ENCODE measurements at regions of chr12 and their contacts with region 1.

Region 1: GRCh38 chr12:133037207-133038005 is at the start of gene ZNF84:
- DNase-seq: peak; percentile 87 to 94
- H3K4me3 ChIP-seq: peak within 1 kb of the TSS; percentile 73 to 85 (median 78)
- H3K27ac ChIP-seq: peak within 1 kb of the TSS; percentile 96
- H3K4me1 ChIP-seq: no peaks in the 10 kb centered on the region
- H3K27me3 ChIP-seq: no peaks in the 10 kb centered on the region
- CTCF ChIP-seq: no peak
- EP300 ChIP-seq: no peak
- POLR2A ChIP-seq: peak; percentile 66 to 88
- RAD21 ChIP-seq: no peak
- total RNA-seq, gene ZNF84: 33.5 and 34.0 TPM in 2 replicates

Region 2: GRCh38 chr12:132986001-132986912 is 51.1 kb before region 1 on chr12 and contains the start of gene ZNF26:
- CTCF ChIA-PET with region 1: no interaction called
- POLR2A ChIA-PET with region 1: interaction called, 21 read pairs
- DNase-seq: peak; percentile 83 to 87
- H3K4me3 ChIP-seq: peak within 1 kb of the TSS; percentile 90 to 98 (median 95)
- H3K27ac ChIP-seq: peak within 1 kb of the TSS; percentile 38; the same call in 1 of the 2 replicates
- H3K4me1 ChIP-seq: no peaks in the 10 kb centered on the region; a peak in 1 of 7 replicates
- H3K27me3 ChIP-seq: no peaks in the 10 kb centered on the region
- CTCF ChIP-seq: no peak
- EP300 ChIP-seq: no peak
- POLR2A ChIP-seq: peak in 1 of 2 experiments; percentile 91; a peak in 2 of 3 replicates
- RAD21 ChIP-seq: no peak
- total RNA-seq, gene ZNF26: 7.6 and 8.4 TPM in 2 replicates

Region 3: GRCh38 chr12:133026996-133027395 is 10.4 kb before region 1 on chr12:
- CTCF ChIA-PET with region 1: no interaction called
- POLR2A ChIA-PET with region 1: interaction called, 11 read pairs
- DNase-seq: no peak
- H3K4me3 ChIP-seq: no peak overlapping the region
- H3K27ac ChIP-seq: no peak overlapping the region
- H3K4me1 ChIP-seq: no peaks in the 10 kb centered on the region
- H3K27me3 ChIP-seq: peaks cover 0 to 2% (median 0%) of the 10 kb centered on the region in 4 experiments; a peak in 1 of 7 replicates
- CTCF ChIP-seq: no peak
- EP300 ChIP-seq: no peak
- POLR2A ChIP-seq: no peak
- RAD21 ChIP-seq: no peak

Region 4: GRCh38 chr12:133058203-133059125 is 21.1 kb after region 1 on chr12:
- CTCF ChIA-PET with region 1: no interaction called
- POLR2A ChIA-PET with region 1: interaction called, 26 read pairs
- DNase-seq: no peak
- H3K4me3 ChIP-seq: peak overlapping the region in 1 of 4 experiments; percentile 42; a peak in 1 of 8 replicates
- H3K27ac ChIP-seq: no peak overlapping the region
- H3K4me1 ChIP-seq: no peaks in the 10 kb centered on the region
- H3K27me3 ChIP-seq: no peaks in the 10 kb centered on the region
- CTCF ChIP-seq: no peak
- EP300 ChIP-seq: no peak
- POLR2A ChIP-seq: peak in 1 of 2 experiments; percentile 6; a peak in 1 of 3 replicates
- RAD21 ChIP-seq: no peak

Region 5: DNA sequence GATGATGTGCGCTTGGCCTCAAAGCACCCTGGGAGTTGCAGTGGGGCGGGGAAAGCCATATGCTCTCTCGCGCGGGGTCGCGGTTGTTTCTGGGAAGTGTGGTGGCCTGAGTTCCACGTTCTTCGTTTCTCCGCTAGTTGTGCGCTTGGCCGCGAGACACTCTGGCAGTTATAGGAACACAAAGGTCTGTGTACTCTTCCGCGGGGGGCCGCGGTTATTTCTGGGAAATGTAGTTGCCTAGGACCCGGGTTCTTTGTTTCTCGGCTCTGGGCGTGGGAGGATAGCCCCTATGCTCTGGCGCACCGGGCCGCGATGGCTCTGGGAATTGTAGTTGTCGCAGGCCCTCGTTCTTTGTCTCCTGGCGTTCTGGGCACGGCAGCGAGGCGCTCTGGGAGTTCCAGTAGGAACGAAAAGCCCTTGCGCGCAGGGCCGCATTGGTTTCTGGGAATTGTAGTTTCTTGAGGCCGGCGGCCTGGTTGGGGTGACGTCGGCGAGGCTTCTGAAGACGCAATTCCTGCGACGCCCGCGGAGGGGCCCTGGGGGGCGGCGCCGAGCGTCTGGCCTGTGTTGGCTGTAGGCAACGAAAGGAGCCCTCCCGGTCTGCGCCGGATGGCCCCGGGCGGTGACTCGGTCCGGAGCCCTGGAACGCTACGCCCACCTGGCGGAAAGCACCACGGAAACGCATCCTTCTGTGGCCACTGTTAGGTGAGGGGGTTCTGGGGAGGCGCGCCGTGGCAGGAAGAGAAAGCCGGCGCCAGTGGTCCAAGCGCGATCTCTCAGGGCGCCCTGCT is 43.2 kb after region 1 on chr12 and contains the start of gene ZNF140:
- CTCF ChIA-PET with region 1: no interaction called
- POLR2A ChIA-PET with region 1: interaction called, 24 read pairs
- DNase-seq: peak; percentile 94
- H3K4me3 ChIP-seq: peak within 1 kb of the TSS; percentile 89 to 100 (median 94)
- H3K27ac ChIP-seq: peak within 1 kb of the TSS; percentile 97
- H3K4me1 ChIP-seq: no peaks in the 10 kb centered on the region
- H3K27me3 ChIP-seq: no peaks in the 10 kb centered on the region
- CTCF ChIP-seq: peak in 2 of 3 experiments; percentile 6 to 14; a peak in 2 of 4 replicates
- EP300 ChIP-seq: no peak
- POLR2A ChIP-seq: peak in 1 of 2 experiments; percentile 89; a peak in 2 of 3 replicates
- RAD21 ChIP-seq: peak; percentile 36 to 37; a peak in 3 of 4 replicates
- total RNA-seq, gene ZNF140: 13.8 and 14.3 TPM in 2 replicates

Region 6: GRCh38 chr12:133130038-133130807 is 92.8 kb after region 1 on chr12 and contains the starts of genes ZNF10 and ZNF891:
- CTCF ChIA-PET with region 1: no interaction called
- POLR2A ChIA-PET with region 1: interaction called, 20 read pairs
- DNase-seq: peak; percentile 88 to 98
- H3K4me3 ChIP-seq: peak within 1 kb of the TSS; percentile 69 to 98 (median 87)
- H3K27ac ChIP-seq: peak within 1 kb of the TSS; percentile 87
- H3K4me1 ChIP-seq: no peaks in the 10 kb centered on the region
- H3K27me3 ChIP-seq: no peaks in the 10 kb centered on the region
- CTCF ChIP-seq: no peak
- EP300 ChIP-seq: no peak
- POLR2A ChIP-seq: peak; percentile 92 to 95
- RAD21 ChIP-seq: no peak
- total RNA-seq, gene ZNF10: 11.9 and 13.7 TPM in 2 replicates
- total RNA-seq, gene ZNF891: 3.1 TPM in 2 replicates

Region 7: GRCh38 chr12:133235401-133236112 is 198.2 kb after region 1 on chr12 and contains the start of gene ANHX:
- CTCF ChIA-PET with region 1: no interaction called
- POLR2A ChIA-PET with region 1: no interaction called
- DNase-seq: no peak
- H3K4me3 ChIP-seq: no peak within 1 kb of the TSS
- H3K27ac ChIP-seq: no peak within 1 kb of the TSS
- H3K4me1 ChIP-seq: no peaks in the 10 kb centered on the region
- H3K27me3 ChIP-seq: no peaks in the 10 kb centered on the region
- CTCF ChIP-seq: no peak
- EP300 ChIP-seq: no peak
- POLR2A ChIP-seq: no peak
- RAD21 ChIP-seq: no peak
- total RNA-seq, gene ANHX: not detected in 2 replicates